PC-3 (cell line): ENCODE measurements at regions of chr17 and their contacts with region 1.

Region 1: DNA sequence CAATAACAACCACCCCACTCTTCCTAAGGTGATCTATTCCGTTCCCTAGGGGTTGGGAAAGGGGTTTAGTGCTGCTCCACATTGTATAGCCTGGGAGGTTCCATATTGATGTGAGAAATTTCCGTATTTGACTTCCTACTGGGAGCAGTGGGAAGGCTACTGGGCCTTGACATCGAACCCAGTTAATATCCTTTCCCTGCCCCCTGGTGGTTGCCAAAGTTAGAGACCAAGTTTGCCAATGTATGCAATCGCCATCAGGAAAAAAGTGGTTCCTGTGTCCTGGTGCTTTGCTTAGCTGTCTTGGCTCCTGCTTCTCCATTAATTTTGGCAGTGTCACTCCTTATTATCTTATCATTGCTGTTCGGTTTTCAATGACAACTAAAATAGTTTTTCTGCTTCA is 914.9 kb downstream of the KCNJ2 start:
- DNase-seq: peak; percentile 77
- ATAC-seq: peak; percentile 70
- H3K4me3 ChIP-seq: no peak overlapping the region
- H3K27ac ChIP-seq: no peak overlapping the region
- H3K4me1 ChIP-seq: no peaks in the 10 kb centered on the region
- H3K27me3 ChIP-seq: no peaks in the 10 kb centered on the region
- CTCF ChIP-seq: peak; percentile 85

Region 2: DNA sequence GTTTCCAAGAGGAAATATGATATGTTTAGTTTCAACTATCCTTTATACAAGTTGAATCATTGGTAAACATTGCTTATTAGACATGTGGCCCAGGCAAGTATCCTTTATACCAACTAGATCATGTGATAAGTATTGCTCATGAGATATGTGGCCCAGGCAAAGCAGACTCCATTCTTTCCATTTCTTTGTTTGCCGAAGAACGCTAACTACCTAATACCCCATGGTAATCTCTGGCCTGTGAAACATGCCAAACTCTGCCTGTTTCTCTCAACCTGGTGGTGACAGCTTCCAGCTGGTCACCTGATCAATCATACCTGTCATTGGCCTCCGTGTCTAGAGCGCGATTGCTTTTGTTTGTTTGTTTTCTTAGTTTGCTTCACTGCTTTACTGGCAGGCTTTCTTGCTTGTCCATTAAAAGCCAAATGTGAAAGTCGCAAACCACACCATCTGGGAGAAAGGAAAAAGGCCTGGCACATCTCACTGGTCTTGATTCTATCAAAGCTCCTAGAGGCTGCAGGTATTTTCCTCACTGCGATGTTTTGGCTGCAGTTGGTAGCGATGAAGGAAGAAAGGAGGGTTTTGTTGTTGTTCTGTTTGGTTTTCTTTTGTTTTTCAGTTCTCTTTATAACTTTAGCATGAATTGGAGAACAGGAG is 228.7 kb before region 1 on chr17:
- CTCF ChIA-PET with region 1: no interaction called
- POLR2A ChIA-PET with region 1: no interaction called
- intact Hi-C with region 1: loop called (anchors 10 kb)
- DNase-seq: peak; percentile 87
- ATAC-seq: peak; percentile 97
- H3K4me3 ChIP-seq: peak overlapping the region; percentile 47
- H3K27ac ChIP-seq: peak overlapping the region; percentile 65
- H3K4me1 ChIP-seq: peaks cover 20% of the 10 kb centered on the region
- H3K27me3 ChIP-seq: no peaks in the 10 kb centered on the region
- CTCF ChIP-seq: no peak

Region 3: DNA sequence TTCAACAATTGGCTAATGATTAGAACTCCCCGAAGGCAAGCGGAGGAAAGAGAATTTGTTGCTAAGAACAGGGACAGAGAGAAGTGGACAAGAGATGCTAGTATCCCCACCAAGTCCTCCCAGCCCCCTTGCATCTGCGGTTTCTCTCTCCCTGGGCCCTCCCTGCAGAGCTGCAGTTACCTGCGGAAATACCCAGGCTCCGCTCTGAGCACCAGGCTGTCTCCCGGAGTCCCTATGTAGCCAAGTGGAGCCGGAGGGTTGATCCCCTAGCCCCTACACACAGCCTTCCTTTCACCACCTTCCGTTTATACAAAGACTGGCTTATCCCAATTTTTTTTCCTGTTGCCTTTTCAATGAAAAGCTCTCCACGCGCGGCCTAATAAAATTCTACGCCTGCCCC is 80.5 kb before region 1 on chr17:
- CTCF ChIA-PET with region 1: no interaction called
- POLR2A ChIA-PET with region 1: no interaction called
- intact Hi-C with region 1: no loop called
- DNase-seq: no peak
- ATAC-seq: no peak
- H3K4me3 ChIP-seq: no peak overlapping the region
- H3K27ac ChIP-seq: no peak overlapping the region
- H3K4me1 ChIP-seq: no peaks in the 10 kb centered on the region
- H3K27me3 ChIP-seq: 0 out of 2 replicates have a peak, but pooled peaks cover 15% of the 10 kb centered on the region
- CTCF ChIP-seq: no peak

Region 4: DNA sequence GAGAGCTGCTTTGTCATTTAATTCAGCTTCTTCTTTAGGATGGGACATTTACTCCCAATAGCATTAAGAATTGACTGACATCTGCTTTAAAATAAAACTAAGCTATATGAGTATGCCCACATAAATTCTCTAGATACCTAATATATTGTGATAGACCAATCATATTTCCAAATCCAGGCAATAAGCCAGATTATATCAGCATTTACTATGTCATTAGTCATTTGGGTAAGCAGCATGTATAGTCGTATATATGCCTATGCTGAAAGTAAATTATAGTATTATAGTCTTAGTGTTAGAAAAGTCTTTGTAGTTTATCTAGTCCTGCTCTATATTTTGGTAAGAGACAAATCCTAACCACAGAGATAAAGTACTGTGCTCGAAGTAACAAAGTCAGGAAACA is 43.2 kb after region 1 on chr17:
- CTCF ChIA-PET with region 1: no interaction called
- POLR2A ChIA-PET with region 1: no interaction called
- intact Hi-C with region 1: no loop called
- DNase-seq: peak; percentile 88
- ATAC-seq: peak; percentile 88
- H3K4me3 ChIP-seq: no peak overlapping the region
- H3K27ac ChIP-seq: no peak overlapping the region
- H3K4me1 ChIP-seq: peaks cover 8% of the 10 kb centered on the region
- H3K27me3 ChIP-seq: no peaks in the 10 kb centered on the region
- CTCF ChIP-seq: no peak